Heart left ventricle (tissue), 16 donors: ENCODE measurements at regions of chr2 and their contacts with region 1.

Region 1: GRCh38 chr2:20661067-20661980 is 5.6 kb upstream of the GDF7 start:
- DNase-seq: peak in 4 of 5 donors; percentile 55 to 71 (median 65)
- ATAC-seq: peak; percentile 34 to 82 (median 78)
- H3K4me3 ChIP-seq: no peak overlapping the region
- H3K27ac ChIP-seq: no peak overlapping the region
- H3K4me1 ChIP-seq: peaks cover 0 to 14% (median 10%) of the 10 kb centered on the region in 12 donors
- H3K27me3 ChIP-seq: peaks cover 20 to 82% (median 50%) of the 10 kb centered on the region in 9 donors
- CTCF ChIP-seq: peak; percentile 90 to 99 (median 96)
- POLR2A ChIP-seq: no peak

Region 2: GRCh38 chr2:20062615-20063545 is 598.4 kb before region 1 on chr2:
- intact Hi-C with region 1: no loop called
- DNase-seq: peak in 3 of 5 donors; percentile 45 to 61 (median 52)
- ATAC-seq: peak in 3 of 4 donors; percentile 49 to 78 (median 69)
- H3K4me3 ChIP-seq: no peak overlapping the region
- H3K27ac ChIP-seq: peak overlapping the region in 7 of 12 donors; percentile 16 to 72 (median 35)
- H3K4me1 ChIP-seq: peaks cover 0 to 21% (median 8%) of the 10 kb centered on the region in 12 donors
- H3K27me3 ChIP-seq: no peaks in the 10 kb centered on the region
- CTCF ChIP-seq: no peak
- POLR2A ChIP-seq: no peak

Region 3: DNA sequence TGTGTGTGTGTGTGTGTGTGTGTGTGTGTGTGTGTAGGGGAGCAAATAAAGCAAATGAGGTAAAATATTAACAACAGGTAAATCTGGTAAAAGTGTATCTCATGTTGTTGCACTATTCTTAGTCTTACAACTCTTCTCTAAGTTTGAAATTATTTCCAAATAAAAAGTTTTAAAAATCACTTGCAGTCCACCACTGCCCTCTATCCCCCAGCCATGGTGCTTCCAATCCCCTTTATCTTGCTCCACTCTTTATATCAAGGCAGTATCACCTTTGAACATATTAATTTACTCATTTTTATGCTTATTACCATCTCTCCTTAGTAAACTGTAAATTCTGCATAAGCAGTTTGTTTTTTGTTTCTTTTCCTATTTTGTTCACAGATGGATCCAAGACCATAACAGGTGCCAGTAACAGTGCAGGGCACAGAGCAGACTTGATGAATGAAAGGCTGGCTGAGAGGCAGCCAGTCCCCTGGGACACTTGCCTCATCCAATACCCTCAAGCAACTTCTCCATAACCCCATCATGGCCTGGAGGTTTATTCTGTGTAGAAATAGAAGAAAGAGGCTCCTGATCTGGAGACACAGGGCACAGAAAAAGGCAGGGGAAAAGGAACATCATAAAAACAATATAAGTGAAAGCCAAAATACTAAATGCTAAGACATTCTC is 93.9 kb after region 1 on chr2:
- intact Hi-C with region 1: loop called in 2 of 10 experiments (anchors 5 to 10 kb)
- DNase-seq: no peak
- ATAC-seq: no peak
- H3K4me3 ChIP-seq: no peak overlapping the region
- H3K27ac ChIP-seq: no peak overlapping the region
- H3K4me1 ChIP-seq: no peaks in the 10 kb centered on the region
- H3K27me3 ChIP-seq: no peaks in the 10 kb centered on the region
- CTCF ChIP-seq: peak in 2 of 12 donors; percentile 12 to 24
- POLR2A ChIP-seq: no peak

Region 4: DNA sequence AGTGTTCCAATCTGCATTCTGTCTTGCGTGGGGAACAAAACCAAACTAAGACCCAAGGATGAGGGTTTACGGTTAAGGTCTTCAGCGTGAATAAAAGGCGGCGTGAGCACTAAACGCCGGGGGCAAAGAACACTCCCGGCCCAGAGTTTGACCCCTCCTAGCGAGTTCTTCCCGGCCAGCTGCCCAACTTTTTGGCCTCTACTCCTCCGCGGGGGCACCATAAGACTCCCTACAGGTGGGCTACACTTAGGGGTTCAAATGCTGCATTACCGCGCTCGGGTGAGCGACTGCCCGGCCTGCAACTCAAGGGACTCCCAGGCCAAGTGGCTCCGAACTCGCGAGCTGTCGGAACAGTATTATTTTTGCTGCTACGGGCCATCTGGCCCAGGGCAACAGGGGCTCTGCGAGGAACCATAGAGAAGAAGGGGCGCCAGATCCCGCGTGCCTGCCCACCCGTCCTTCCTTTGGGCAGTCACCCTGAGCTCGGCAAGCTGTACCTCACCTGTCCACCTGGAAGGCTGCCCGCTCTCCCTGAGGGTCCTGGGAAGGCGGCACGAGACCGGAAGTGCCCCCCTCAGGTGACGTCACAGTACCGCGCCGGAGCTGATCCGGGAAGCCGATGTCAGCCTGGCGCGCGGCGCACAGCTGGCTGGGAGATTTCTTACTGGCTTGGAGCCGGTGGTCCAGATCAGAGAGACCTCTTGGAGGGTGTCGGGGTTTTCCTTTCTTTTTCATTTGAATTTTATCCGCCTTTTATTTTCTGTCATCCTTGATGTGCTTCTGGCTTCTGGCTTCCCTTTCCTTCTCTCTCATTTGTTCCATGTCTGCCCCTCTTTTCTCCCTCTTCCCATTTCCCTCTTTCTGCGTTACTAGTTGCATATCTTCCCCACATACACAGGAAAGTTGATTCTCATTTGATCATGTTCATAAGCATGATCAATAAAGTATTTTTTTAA is 161.5 kb after region 1 on chr2 and contains the start of gene LDAH:
- intact Hi-C with region 1: loop called in 3 of 10 experiments (anchors 5 to 10 kb)
- DNase-seq: peak; percentile 91 to 96 (median 94)
- ATAC-seq: peak; percentile 96 to 99 (median 98)
- H3K4me3 ChIP-seq: peak within 1 kb of the TSS; percentile 57 to 97 (median 82)
- H3K27ac ChIP-seq: peak within 1 kb of the TSS; percentile 47 to 93 (median 80)
- H3K4me1 ChIP-seq: peaks cover 0 to 12% (median 2%) of the 10 kb centered on the region in 12 donors
- H3K27me3 ChIP-seq: no peaks in the 10 kb centered on the region
- CTCF ChIP-seq: no peak
- POLR2A ChIP-seq: peak in 1 of 2 donors; percentile 52
- total RNA-seq, gene LDAH: 2.5 to 13.2 (median 7.1) TPM

Region 5: GRCh38 chr2:20962939-20963557 is 301.7 kb after region 1 on chr2:
- intact Hi-C with region 1: loop called (anchors 1 to 2 kb)
- DNase-seq: peak in 4 of 5 donors; percentile 46 to 59 (median 58)
- ATAC-seq: peak in 3 of 4 donors; percentile 66 to 72 (median 70)
- H3K4me3 ChIP-seq: no peak overlapping the region
- H3K27ac ChIP-seq: no peak overlapping the region
- H3K4me1 ChIP-seq: no peaks in the 10 kb centered on the region
- H3K27me3 ChIP-seq: peaks cover 0 to 44% (median 6%) of the 10 kb centered on the region in 9 donors
- CTCF ChIP-seq: peak; percentile 79 to 93 (median 85)
- POLR2A ChIP-seq: no peak

Region 6: GRCh38 chr2:21118302-21118920 is 457.1 kb after region 1 on chr2:
- intact Hi-C with region 1: loop called in 8 of 10 experiments (anchors 5 to 10 kb)
- DNase-seq: no peak
- ATAC-seq: peak in 1 of 4 donors; percentile 36
- H3K4me3 ChIP-seq: no peak overlapping the region
- H3K27ac ChIP-seq: no peak overlapping the region
- H3K4me1 ChIP-seq: no peaks in the 10 kb centered on the region
- H3K27me3 ChIP-seq: peaks cover 0 to 10% (median 0%) of the 10 kb centered on the region in 9 donors
- CTCF ChIP-seq: peak; percentile 36 to 59 (median 46)
- POLR2A ChIP-seq: no peak